H1 (cell line): ENCODE measurements at regions of chr20 and their contacts with region 1.

Region 1: GRCh38 chr20:51616060-51616459 is 73.5 kb upstream of the NFATC2 start:
- DNase-seq: no peak
- H3K4me3 ChIP-seq: no peak overlapping the region
- H3K27ac ChIP-seq: no peak overlapping the region
- H3K4me1 ChIP-seq: no peaks in the 10 kb centered on the region; a peak in 1 of 7 replicates
- H3K27me3 ChIP-seq: no peaks in the 10 kb centered on the region
- CTCF ChIP-seq: peak; percentile 46 to 47 (median 47); a peak in 3 of 4 replicates
- EP300 ChIP-seq: no peak
- POLR2A ChIP-seq: no peak
- RAD21 ChIP-seq: peak; percentile 42 to 43; a peak in 3 of 4 replicates

Region 2: GRCh38 chr20:51378171-51378929 is 237.7 kb before region 1 on chr20:
- CTCF ChIA-PET with region 1: interaction called, 14 read pairs
- POLR2A ChIA-PET with region 1: no interaction called
- DNase-seq: peak in 1 of 2 experiments; percentile 58
- H3K4me3 ChIP-seq: no peak overlapping the region
- H3K27ac ChIP-seq: no peak overlapping the region
- H3K4me1 ChIP-seq: no peaks in the 10 kb centered on the region
- H3K27me3 ChIP-seq: no peaks in the 10 kb centered on the region
- CTCF ChIP-seq: peak; percentile 68 to 69 (median 68)
- EP300 ChIP-seq: no peak
- POLR2A ChIP-seq: no peak
- RAD21 ChIP-seq: peak; percentile 89 to 92